AG04450 (cell line): ENCODE measurements at regions of chr17 and their contacts with region 1.

Region 1: DNA sequence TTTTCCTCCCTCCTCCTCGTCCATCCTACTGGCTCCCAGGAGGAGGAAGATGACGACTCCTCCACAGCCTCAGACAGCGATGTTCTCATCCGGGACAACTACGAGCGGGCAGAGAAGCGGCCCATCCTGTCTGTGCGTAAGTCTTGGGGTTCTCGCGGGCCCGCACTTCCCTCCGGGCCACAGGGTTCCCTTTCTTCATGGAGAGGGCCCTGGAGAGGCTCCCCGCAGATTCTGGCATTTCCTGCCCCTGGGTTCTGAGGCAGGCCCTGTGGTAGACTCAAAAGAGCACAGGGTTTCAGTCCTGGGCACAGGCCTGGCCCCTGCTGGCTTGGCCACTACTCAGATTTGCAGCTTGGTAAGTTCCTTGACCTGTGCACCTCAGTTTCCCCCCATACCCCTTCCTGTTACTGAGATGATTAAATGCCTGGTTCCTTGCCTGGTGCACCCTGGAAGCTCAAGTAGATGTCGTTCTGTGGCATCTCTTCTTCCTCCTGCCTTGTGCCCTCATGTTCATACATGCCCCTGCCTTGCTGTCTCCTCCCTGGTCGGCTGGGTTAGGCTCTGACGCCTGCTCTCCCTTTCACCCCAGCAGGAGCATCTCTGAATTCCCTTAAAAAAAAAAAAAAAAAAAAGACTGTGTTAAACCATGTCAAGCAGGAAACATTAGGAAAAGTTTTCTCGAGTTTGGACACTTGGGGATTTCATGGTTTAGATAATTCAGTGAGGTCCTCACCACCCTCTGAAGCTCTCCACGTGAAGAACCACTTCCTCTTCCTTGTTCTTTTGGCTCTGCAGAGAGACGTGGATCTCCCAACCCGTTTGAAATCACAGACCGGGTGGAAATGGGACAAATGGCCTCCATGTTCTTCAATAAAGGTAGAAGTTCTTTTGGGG is 14.3 kb upstream of the NAT9 start:
- DNase-seq: no peak
- H3K4me3 ChIP-seq: no peak overlapping the region
- H3K27ac ChIP-seq: no peak overlapping the region
- H3K27me3 ChIP-seq: no peaks in the 10 kb centered on the region
- CTCF ChIP-seq: no peak

Region 2: GRCh38 chr17:74776044-74776977 is 14.1 kb before region 1 on chr17 and contains the start of gene NAT9:
- CTCF ChIA-PET with region 1: interaction called, 45 read pairs
- POLR2A ChIA-PET with region 1: no interaction called
- DNase-seq: peak; percentile 86
- H3K4me3 ChIP-seq: peak within 1 kb of the TSS; percentile 93
- H3K27ac ChIP-seq: peak within 1 kb of the TSS; percentile 31
- H3K27me3 ChIP-seq: no peaks in the 10 kb centered on the region
- CTCF ChIP-seq: no peak
- polyA plus RNA-seq, gene NAT9: 33.6 and 37.3 TPM in 2 replicates

Region 3: GRCh38 chr17:74822939-74823367 is 32.5 kb after region 1 on chr17:
- CTCF ChIA-PET with region 1: interaction called, 22 read pairs
- POLR2A ChIA-PET with region 1: no interaction called
- DNase-seq: no peak
- H3K4me3 ChIP-seq: no peak overlapping the region
- H3K27ac ChIP-seq: no peak overlapping the region
- H3K27me3 ChIP-seq: no peaks in the 10 kb centered on the region
- CTCF ChIP-seq: no peak

Region 4: DNA sequence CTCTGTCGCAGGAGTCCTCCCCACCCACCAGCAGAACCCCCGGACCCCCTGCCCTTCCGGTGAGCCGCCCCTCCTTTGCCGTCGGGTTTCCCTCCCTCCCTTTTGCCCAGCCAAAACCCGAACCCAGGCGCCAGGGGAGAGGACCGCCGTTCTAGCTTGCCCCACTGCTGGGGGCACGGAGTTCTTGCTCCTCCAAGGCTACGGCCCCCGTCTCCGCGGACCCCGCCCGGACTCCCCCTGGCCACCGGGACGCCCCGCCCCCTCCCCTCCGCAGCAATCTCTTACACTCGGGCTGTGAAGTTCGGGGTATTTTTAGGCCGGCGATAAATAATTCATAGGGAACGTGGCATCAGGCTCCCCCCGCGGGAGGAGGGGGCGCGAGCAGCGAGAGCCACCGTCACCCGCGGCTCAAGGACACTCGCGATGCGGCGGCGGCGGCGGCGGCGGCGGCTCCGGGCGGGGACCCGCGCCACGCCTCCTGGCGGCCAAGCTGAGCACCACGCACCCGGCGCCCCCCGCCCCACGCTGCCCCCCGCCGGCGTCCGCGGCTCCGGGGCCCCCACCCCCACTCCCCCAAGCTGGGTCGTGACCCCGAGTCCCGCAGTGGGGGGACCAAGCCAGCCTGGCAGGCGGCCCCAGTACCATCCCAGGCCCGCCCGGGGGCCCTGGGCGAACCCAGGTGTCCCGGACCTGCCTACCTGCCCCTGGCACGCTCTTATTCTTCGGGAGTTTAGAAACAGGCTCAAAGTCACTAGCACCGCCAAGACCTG is 69.2 kb after region 1 on chr17 and contains the start of gene GRIN2C:
- CTCF ChIA-PET with region 1: interaction called, 198 read pairs
- POLR2A ChIA-PET with region 1: no interaction called
- DNase-seq: no peak
- H3K4me3 ChIP-seq: no peak within 1 kb of the TSS
- H3K27ac ChIP-seq: no peak within 1 kb of the TSS
- H3K27me3 ChIP-seq: peaks cover 52% of the 10 kb centered on the region
- CTCF ChIP-seq: no peak
- polyA plus RNA-seq, gene GRIN2C: 0.01 TPM in 1 of 2 replicates, not detected in the other

Region 5: DNA sequence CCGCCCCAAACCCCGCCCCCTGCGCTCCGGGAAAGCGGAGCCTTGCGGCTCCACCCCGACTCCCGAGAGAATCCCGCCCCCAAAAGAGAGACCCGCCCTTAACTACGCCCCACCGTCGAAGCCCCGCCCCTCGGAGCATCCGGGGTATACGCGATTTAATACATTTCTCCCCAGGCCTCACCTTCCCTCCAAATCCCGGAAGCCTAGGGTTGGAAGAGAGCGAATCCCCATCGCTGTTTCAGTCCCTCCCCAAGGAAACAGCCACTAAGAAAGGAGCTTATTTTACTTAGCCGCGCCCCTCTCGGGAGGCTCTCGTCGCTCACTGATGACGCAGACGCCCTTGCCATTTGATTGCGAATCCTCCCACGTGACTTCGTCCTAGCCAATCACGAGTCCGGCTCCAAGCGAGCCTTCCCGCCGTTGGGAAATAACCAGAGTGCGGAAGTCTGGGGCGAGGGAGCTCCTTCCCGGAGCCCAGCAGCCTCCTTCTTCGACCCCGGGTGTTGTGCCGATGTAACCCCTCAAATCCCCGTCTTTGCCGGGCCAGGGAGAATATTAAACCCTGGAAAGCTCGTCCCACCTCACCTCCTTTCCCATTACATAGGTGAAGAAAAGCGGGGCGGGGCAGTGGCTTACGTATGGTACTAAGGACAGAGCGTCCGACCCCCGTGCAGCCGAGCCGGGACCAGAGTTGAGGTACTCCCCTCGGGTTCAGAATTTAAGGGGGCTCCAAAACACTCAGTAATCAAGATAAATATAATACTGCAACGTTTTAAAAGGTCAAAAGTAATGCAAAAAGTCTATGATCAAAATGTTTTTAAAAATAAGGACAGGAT is 82.8 kb after region 1 on chr17:
- CTCF ChIA-PET with region 1: interaction called, 198 read pairs
- POLR2A ChIA-PET with region 1: no interaction called
- DNase-seq: peak; percentile 99
- H3K4me3 ChIP-seq: peak overlapping the region; percentile 86
- H3K27ac ChIP-seq: peak overlapping the region; percentile 83
- H3K27me3 ChIP-seq: peaks cover 8% of the 10 kb centered on the region
- CTCF ChIP-seq: no peak